B cell (primary cell): ENCODE measurements at regions of chr7 and their contacts with region 1.

Region 1: GRCh38 chr7:100556541-100556940 is 17.2 kb downstream of the SAP25 start:
- DNase-seq: no peak
- ATAC-seq: no peak
- H3K4me3 ChIP-seq: no peak overlapping the region
- H3K4me3 Mint-ChIP-seq: no peak overlapping the region
- H3K27ac ChIP-seq: no peak overlapping the region
- H3K27ac Mint-ChIP-seq: no peak overlapping the region
- H3K4me1 ChIP-seq: peaks cover 3 to 5% of the 10 kb centered on the region in 2 donors
- H3K4me1 Mint-ChIP-seq: peaks cover 5% of the 10 kb centered on the region
- H3K27me3 ChIP-seq: no peaks in the 10 kb centered on the region
- H3K27me3 Mint-ChIP-seq: no peaks in the 10 kb centered on the region
- CTCF ChIP-seq: no peak

Region 2: DNA sequence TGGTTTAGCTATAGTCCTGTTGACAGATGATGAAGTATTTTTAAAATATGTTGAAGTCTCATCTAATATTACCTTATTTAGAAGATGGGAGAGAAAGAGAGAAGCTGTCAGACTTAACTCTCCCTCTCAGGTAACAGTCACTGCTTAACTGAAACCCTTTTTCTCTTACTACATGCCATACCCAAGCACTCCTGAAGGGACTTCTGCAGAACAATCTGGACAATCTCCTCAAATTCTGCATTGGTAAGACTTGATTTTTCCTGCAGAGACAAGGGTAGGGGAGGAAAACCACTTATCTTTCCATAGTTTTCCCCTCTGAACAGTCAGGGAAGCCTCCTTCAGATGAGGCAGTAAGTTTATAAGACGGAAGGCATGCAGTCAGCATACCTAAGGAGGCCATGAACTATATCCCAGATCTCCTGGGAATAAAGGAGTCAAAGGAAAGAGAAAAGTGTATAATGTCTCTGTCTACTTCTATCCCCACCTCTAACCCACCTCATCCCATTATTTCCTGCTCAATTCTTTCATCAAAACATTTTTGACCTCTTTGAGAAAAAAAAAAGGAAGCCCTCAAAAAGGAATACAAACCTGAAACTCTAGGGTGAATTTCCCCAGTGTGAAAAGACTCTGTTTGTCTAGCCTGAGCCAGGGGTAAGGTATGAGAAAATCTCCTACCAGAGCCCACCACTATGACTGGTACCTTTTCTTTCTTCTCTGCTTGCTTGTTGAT is 137.4 kb before region 1 on chr7:
- CTCF ChIA-PET with region 1: no interaction called
- POLR2A ChIA-PET with region 1: no interaction called
- intact Hi-C with region 1: no loop called
- DNase-seq: no peak
- ATAC-seq: no peak
- H3K4me3 ChIP-seq: no peak overlapping the region
- H3K4me3 Mint-ChIP-seq: no peak overlapping the region
- H3K27ac ChIP-seq: no peak overlapping the region
- H3K27ac Mint-ChIP-seq: no peak overlapping the region
- H3K4me1 ChIP-seq: no peaks in the 10 kb centered on the region
- H3K4me1 Mint-ChIP-seq: peaks cover 5% of the 10 kb centered on the region
- H3K27me3 ChIP-seq: no peaks in the 10 kb centered on the region
- H3K27me3 Mint-ChIP-seq: no peaks in the 10 kb centered on the region
- CTCF ChIP-seq: no peak

Region 3: GRCh38 chr7:100478966-100479665 is 77.4 kb before region 1 on chr7 and contains the start of gene TSC22D4:
- CTCF ChIA-PET with region 1: interaction called, 18 read pairs
- POLR2A ChIA-PET with region 1: interaction called, 5 read pairs
- intact Hi-C with region 1: loop called (anchors 1 kb)
- DNase-seq: peak; percentile 92
- ATAC-seq: peak; percentile 70
- H3K4me3 ChIP-seq: peak within 1 kb of the TSS; percentile 90 to 99 (median 96)
- H3K4me3 Mint-ChIP-seq: peak within 1 kb of the TSS; percentile 97
- H3K27ac ChIP-seq: peak within 1 kb of the TSS; percentile 72 to 89
- H3K27ac Mint-ChIP-seq: peak within 1 kb of the TSS; percentile 91
- H3K4me1 ChIP-seq: peaks cover 34 to 51% of the 10 kb centered on the region in 2 donors
- H3K4me1 Mint-ChIP-seq: peaks cover 37% of the 10 kb centered on the region
- H3K27me3 ChIP-seq: no peaks in the 10 kb centered on the region
- H3K27me3 Mint-ChIP-seq: no peaks in the 10 kb centered on the region
- CTCF ChIP-seq: no peak
- total RNA-seq, gene TSC22D4: 92.8 and 95.0 TPM in 2 replicates

Region 4: GRCh38 chr7:100516135-100516812 is 40.3 kb before region 1 on chr7:
- CTCF ChIA-PET with region 1: interaction called, 15 read pairs
- POLR2A ChIA-PET with region 1: no interaction called
- intact Hi-C with region 1: no loop called
- DNase-seq: no peak
- ATAC-seq: no peak
- H3K4me3 ChIP-seq: no peak overlapping the region
- H3K4me3 Mint-ChIP-seq: no peak overlapping the region
- H3K27ac ChIP-seq: no peak overlapping the region
- H3K27ac Mint-ChIP-seq: no peak overlapping the region
- H3K4me1 ChIP-seq: peaks cover 4 to 14% of the 10 kb centered on the region in 2 donors
- H3K4me1 Mint-ChIP-seq: peaks cover 7% of the 10 kb centered on the region
- H3K27me3 ChIP-seq: peaks cover 0 to 2% (median 0%) of the 10 kb centered on the region in 4 experiments
- H3K27me3 Mint-ChIP-seq: peaks cover 3% of the 10 kb centered on the region
- CTCF ChIP-seq: no peak

Region 5: GRCh38 chr7:100545360-100546128 is 11.0 kb before region 1 on chr7:
- CTCF ChIA-PET with region 1: interaction called, 67 read pairs
- POLR2A ChIA-PET with region 1: no interaction called
- intact Hi-C with region 1: no loop called
- DNase-seq: no peak
- ATAC-seq: peak; percentile 31
- H3K4me3 ChIP-seq: no peak overlapping the region
- H3K4me3 Mint-ChIP-seq: peak overlapping the region; percentile 35
- H3K27ac ChIP-seq: peak overlapping the region in 1 of 2 donors; percentile 12
- H3K27ac Mint-ChIP-seq: peak overlapping the region; percentile 43
- H3K4me1 ChIP-seq: peaks cover 36 to 57% of the 10 kb centered on the region in 2 donors
- H3K4me1 Mint-ChIP-seq: peaks cover 72% of the 10 kb centered on the region
- H3K27me3 ChIP-seq: no peaks in the 10 kb centered on the region
- H3K27me3 Mint-ChIP-seq: no peaks in the 10 kb centered on the region
- CTCF ChIP-seq: no peak

Region 6: GRCh38 chr7:100691676-100692577 is 135.4 kb after region 1 on chr7:
- CTCF ChIA-PET with region 1: interaction called, 19 read pairs
- POLR2A ChIA-PET with region 1: no interaction called
- intact Hi-C with region 1: no loop called
- DNase-seq: peak; percentile 86
- ATAC-seq: peak; percentile 60
- H3K4me3 ChIP-seq: peak overlapping the region in 2 of 5 experiments; percentile 58 to 79
- H3K4me3 Mint-ChIP-seq: peak overlapping the region; percentile 89
- H3K27ac ChIP-seq: no peak overlapping the region
- H3K27ac Mint-ChIP-seq: peak overlapping the region; percentile 92
- H3K4me1 ChIP-seq: peaks cover 52 to 55% of the 10 kb centered on the region in 2 donors
- H3K4me1 Mint-ChIP-seq: peaks cover 51% of the 10 kb centered on the region
- H3K27me3 ChIP-seq: no peaks in the 10 kb centered on the region
- H3K27me3 Mint-ChIP-seq: no peaks in the 10 kb centered on the region
- CTCF ChIP-seq: peak; percentile 88